ENCODE measurements at regions of chr19 and their contacts with region 1.

Region 1: DNA sequence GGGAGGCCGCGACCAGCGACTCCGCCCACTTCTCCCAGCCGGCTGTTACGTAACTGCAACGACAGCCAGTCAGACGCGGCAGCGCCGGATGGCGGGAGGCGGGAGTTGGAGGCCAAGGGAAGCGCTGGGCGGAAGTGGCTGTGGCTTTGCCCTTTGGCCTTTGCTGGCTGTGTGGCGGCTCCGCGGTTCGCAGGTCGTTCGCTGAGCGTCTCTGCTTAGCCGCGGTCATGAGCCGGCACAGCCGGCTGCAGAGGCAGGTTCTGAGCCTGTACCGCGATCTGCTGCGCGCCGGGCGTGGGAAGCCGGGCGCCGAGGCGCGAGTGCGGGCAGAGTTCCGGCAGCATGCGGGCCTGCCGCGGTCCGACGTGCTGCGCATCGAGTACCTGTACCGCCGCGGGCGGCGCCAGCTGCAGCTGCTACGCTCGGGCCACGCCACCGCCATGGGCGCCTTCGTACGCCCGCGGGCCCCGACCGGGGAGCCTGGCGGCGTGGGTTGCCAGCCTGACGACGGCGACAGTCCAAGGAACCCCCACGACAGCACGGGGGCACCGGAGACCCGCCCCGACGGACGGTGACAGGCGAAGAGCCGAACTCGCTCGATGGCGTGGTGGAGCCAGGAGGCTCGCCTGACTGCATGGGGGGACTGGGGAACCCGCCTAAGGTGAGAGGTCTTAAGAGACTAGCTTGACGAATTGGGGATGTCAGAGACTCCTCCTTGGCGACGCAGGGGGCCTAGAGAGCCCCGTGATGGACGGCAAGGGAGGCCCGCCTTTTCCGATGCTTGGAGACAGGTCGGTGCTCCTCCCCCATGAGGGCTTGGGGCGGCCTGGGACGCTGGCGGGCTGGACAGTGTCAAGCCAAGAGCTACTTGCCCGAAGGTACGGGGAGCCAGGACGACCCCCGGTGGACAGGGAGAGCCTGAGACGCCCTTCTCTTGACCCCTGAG is at the start of gene SDHAF1:
- DNase-seq: peak; percentile 92
- H3K4me3 ChIP-seq: peak within 1 kb of the TSS; percentile 62 to 75 (median 64)
- H3K27ac ChIP-seq: peak within 1 kb of the TSS; percentile 47
- H3K4me1 ChIP-seq: peaks cover 10% of the 10 kb centered on the region
- H3K27me3 ChIP-seq: no peaks in the 10 kb centered on the region
- CTCF ChIP-seq: no peak
- POLR2A ChIP-seq: peak; percentile 90
- total RNA-seq, gene SDHAF1: 8.4 and 10.3 TPM in 2 replicates

Region 2: DNA sequence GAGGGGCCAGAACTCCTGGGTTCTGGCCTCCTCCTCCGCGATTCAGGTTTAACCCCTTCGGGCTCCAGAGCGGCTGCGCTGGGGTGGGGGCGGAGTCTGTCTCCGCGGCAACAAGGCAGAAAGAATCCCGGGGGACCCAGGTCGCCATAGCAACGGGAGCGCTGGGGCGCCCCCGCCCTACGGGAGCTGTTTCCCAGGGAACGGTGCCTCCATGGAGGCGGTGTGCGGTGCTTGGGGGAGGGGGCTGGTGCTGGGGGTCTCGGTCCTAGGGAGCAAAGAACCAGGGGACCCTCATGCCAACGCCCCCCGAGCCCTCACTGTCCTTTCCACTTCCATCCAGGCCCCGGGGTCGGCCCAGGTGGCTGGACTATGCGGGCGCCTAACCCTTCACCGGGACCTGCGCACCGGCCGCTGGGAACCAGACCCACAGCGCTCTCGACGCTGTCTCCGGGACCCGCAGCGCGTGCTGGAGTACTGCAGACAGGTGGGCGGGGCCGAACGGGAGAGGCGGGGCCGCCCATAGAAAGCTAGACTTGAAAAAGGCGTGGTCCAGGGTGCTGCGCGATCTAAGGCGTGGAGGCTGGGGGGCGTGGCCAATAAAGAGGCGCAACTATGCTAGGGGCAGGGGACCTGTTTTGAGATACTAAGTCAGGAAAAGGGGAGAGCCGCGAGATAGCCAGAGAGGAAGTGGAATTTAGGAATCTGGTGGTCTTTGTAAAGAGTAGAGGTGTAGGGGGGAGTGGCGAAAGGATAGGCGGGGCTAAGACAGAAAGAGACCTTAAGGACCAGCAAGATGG is 125.8 kb before region 1 on chr19:
- CTCF ChIA-PET with region 1: no interaction called
- POLR2A ChIA-PET with region 1: no interaction called
- dilution Hi-C with region 1: no loop called
- intact Hi-C with region 1: no loop called
- DNase-seq: peak; percentile 80
- H3K4me3 ChIP-seq: no peak overlapping the region
- H3K27ac ChIP-seq: no peak overlapping the region
- H3K4me1 ChIP-seq: peaks cover 4% of the 10 kb centered on the region
- H3K27me3 ChIP-seq: peaks cover 2 to 7% of the 10 kb centered on the region in 2 experiments
- CTCF ChIP-seq: no peak
- POLR2A ChIP-seq: no peak

Region 3: GRCh38 chr19:35963514-35963913 is 31.8 kb before region 1 on chr19:
- CTCF ChIA-PET with region 1: no interaction called
- POLR2A ChIA-PET with region 1: no interaction called
- dilution Hi-C with region 1: no loop called
- intact Hi-C with region 1: no loop called
- DNase-seq: peak; percentile 55
- H3K4me3 ChIP-seq: no peak overlapping the region
- H3K27ac ChIP-seq: no peak overlapping the region
- H3K4me1 ChIP-seq: no peaks in the 10 kb centered on the region
- H3K27me3 ChIP-seq: peaks cover 17 to 21% of the 10 kb centered on the region in 2 experiments
- CTCF ChIP-seq: no peak
- POLR2A ChIP-seq: no peak

Region 4: GRCh38 chr19:36014029-36014924 is 19.0 kb after region 1 on chr19 and contains the start of gene ALKBH6:
- CTCF ChIA-PET with region 1: interaction called, 6 read pairs
- POLR2A ChIA-PET with region 1: no interaction called
- dilution Hi-C with region 1: no loop called
- intact Hi-C with region 1: loop called (anchors 1 kb)
- DNase-seq: peak; percentile 99
- H3K4me3 ChIP-seq: peak within 1 kb of the TSS; percentile 69 to 96 (median 91)
- H3K27ac ChIP-seq: peak within 1 kb of the TSS; percentile 65
- H3K4me1 ChIP-seq: peaks cover 14% of the 10 kb centered on the region
- H3K27me3 ChIP-seq: no peaks in the 10 kb centered on the region
- CTCF ChIP-seq: no peak
- POLR2A ChIP-seq: peak; percentile 23
- total RNA-seq, gene ALKBH6: 17.3 and 21.4 TPM in 2 replicates

Measured in endothelial cell of umbilical vein (primary cell).